ENCODE measurements at regions of chr5 and their contacts with region 1.

Region 1: DNA sequence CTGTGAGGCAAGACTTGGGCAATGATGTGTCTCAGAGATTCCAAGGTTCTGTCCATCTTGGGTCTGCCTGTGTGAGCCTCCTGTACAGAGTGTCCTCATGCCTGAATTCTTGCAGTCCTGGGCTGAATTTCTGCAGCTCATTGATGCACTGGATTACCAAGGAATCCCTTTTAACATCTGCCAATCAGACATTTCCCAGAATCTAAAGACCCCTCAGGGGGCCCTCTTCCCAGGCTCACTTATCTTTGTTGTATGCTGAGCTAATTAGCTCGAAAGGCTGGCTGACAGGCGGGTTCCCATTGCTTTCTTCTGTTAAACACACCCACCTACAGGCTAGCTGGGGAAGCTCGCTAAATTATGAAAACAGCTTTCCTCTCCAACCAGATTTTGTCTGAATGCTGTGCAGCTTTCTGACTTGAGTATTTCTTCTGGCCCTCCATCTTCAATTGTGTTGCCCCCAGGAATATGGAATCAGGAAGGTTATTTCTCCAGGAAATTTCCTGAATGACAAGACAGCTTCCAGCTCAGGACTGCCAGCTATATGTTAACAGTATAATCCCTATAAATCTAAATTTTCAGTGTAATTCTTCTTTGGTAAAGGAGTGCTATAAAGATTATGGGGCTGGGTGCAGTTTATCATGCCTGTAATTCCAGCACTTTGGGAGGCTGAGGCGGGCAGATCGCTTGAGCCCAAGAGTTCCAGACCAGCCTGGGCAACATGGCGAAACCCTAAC is at the start of gene LIX1:
- DNase-seq: no peak
- H3K4me3 ChIP-seq: no peak within 1 kb of the TSS
- H3K27me3 ChIP-seq: peaks cover 3% of the 10 kb centered on the region
- CTCF ChIP-seq: peak; percentile 63
- polyA plus RNA-seq, gene LIX1: not detected in 2 replicates

Region 2: DNA sequence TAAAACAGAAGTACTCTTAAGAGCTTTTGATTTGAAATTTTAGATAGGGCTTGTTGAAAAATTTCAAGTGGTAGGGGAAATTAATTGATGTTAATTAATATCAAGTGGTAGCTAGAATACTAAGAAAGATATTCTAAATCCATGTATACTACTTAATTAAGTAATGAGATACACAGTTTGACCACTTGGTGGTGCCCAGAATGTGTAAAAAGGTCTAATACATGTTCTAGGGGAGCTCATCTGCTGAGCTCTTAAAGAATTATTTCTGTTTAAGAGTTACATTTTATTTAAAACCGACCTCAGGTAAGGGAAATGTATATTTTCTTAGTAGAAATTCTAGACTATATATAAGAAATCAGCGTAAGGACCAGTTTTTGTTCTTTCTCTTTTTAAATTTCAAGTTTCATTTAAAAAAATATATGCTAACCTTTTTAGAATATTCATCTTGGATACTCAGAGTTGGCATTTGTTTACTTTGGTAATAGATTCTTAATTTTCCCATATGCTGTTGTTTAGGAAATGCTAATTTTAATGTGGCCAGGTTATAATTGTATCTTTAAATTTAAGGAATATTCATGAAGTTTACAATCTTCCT is 145.3 kb before region 1 on chr5:
- CTCF ChIA-PET with region 1: interaction called, 12 read pairs
- POLR2A ChIA-PET with region 1: no interaction called
- DNase-seq: no peak
- H3K4me3 ChIP-seq: no peak overlapping the region
- H3K27me3 ChIP-seq: no peaks in the 10 kb centered on the region
- CTCF ChIP-seq: peak; percentile 49

Region 3: GRCh38 chr5:97162045-97162444 is 19.4 kb after region 1 on chr5:
- CTCF ChIA-PET with region 1: interaction called, 10 read pairs
- POLR2A ChIA-PET with region 1: no interaction called
- DNase-seq: peak; percentile 25
- H3K4me3 ChIP-seq: no peak overlapping the region
- H3K27me3 ChIP-seq: no peaks in the 10 kb centered on the region
- CTCF ChIP-seq: peak; percentile 85